ENCODE measurements at regions of chr7 and their contacts with region 1.

Region 1: GRCh38 chr7:80659120-80660055 is 20.9 kb downstream of the CD36 start:
- DNase-seq: peak; percentile 20
- H3K4me3 ChIP-seq: no peak overlapping the region
- H3K27ac ChIP-seq: no peak overlapping the region
- H3K4me1 ChIP-seq: no peaks in the 10 kb centered on the region
- H3K27me3 ChIP-seq: no peaks in the 10 kb centered on the region
- CTCF ChIP-seq: peak; percentile 61 to 64

Region 2: GRCh38 chr7:80060218-80060806 is 599.1 kb before region 1 on chr7:
- CTCF ChIA-PET with region 1: no interaction called
- dilution Hi-C with region 1: no loop called
- in situ Hi-C with region 1: no loop called
- intact Hi-C with region 1: loop called (anchors 10 kb)
- DNase-seq: peak; percentile 43
- H3K4me3 ChIP-seq: no peak overlapping the region
- H3K27ac ChIP-seq: no peak overlapping the region
- H3K4me1 ChIP-seq: no peaks in the 10 kb centered on the region
- H3K27me3 ChIP-seq: no peaks in the 10 kb centered on the region
- CTCF ChIP-seq: peak; percentile 38 to 51

Region 3: GRCh38 chr7:80095545-80095944 is 563.8 kb before region 1 on chr7:
- CTCF ChIA-PET with region 1: no interaction called
- dilution Hi-C with region 1: no loop called
- in situ Hi-C with region 1: loop called (anchors 25 kb)
- intact Hi-C with region 1: no loop called
- DNase-seq: no peak
- H3K4me3 ChIP-seq: no peak overlapping the region
- H3K27ac ChIP-seq: no peak overlapping the region
- H3K4me1 ChIP-seq: no peaks in the 10 kb centered on the region
- H3K27me3 ChIP-seq: no peaks in the 10 kb centered on the region
- CTCF ChIP-seq: peak; percentile 22 to 46